ENCODE measurements at regions of chr12 and their contacts with region 1.

Region 1: DNA sequence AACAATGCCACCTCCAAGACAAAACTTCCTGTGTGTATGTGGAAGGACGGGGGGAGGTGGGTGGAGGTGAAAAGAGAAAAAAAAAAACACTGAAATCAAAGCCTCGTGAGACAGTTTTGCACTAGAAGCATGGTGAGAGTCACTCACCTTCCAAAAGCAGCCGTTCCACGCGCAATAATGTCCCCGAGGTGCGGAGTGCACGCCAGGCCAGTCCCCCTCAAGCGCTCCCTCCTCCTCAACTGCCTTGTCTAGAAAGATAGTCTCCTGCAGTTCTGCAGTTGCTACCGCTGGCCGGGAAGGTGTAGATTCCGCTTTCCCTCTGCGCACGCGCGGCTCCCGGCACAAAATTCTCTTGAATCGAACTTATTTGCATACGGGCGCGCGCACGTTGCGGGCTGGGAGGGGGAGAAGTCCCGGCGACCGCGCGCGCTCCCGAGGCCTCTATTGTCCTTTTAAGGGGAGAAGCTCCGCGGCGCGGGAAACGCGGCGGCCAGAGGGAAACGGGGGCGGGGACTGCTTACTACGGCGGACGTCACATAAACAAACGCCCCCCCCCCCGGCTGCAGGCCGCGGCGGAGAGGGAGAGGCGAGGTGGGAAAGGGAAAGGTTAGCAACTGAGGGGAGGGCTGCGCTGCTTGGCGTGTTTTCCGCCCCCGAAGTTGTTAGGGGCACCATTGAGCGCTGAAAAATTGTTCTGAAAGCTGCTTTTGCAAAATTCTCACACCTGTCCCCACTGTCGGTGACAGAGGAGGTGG is at the start of gene SINHCAF:
- DNase-seq: peak; percentile 100
- H3K4me3 Mint-ChIP-seq: peak within 1 kb of the TSS; percentile 99
- H3K27ac Mint-ChIP-seq: peak within 1 kb of the TSS; percentile 100
- H3K4me1 Mint-ChIP-seq: peaks cover 30% of the 10 kb centered on the region
- H3K27me3 Mint-ChIP-seq: peaks cover 12% of the 10 kb centered on the region
- total RNA-seq, gene SINHCAF: 261 and 277 TPM in 2 replicates

Region 2: DNA sequence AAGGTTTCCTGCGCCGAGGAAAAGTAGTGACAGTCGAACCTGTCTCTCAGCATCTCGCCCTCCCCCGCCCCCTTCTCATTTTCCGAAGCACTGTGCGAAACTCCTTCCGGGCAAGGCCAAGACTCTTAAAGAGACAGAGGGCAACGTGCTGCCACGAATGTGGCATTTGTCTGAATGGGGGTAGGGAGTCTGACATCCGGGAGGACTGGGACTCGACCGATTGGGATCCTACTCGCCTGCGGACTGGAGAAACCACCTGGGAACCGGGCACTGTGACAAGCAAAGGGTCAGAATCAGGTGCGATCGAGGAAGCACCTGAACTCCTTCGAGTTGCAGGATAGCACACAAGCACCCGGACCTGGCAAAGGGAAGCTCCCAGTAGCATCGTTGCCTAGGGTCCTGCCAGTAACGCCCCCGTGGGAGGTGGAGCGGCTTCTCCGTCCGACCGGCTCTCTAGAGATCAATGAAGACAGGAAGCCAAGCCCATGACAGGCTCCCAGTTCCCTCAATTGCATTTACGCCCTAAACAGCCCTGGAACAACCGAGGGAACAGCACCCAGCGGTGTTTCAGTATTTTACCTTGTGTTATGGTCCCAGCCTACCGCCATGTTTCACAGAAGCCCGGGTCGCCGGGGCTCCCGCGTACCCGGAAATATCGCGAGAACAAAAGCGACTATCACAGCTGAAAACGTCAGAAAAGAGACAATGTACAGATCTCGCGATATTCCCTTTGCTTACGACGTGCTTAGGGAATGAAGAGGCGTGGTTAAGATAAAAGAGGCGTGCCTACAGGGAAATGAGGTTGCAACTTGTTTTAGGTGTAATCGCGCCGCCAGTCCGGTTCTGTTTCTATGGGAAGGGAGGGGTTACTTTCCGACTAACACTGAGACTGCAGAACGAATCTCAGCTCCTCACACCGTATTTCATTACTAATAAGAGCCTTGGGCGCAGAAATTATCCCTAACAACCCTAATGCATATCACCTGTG is 1945.2 kb before region 1 on chr12 and contains the start of gene ERGIC2:
- intact Hi-C with region 1: loop called (anchors 10 kb)
- DNase-seq: peak; percentile 97
- H3K4me3 Mint-ChIP-seq: peak within 1 kb of the TSS; percentile 96
- H3K27ac Mint-ChIP-seq: peak within 1 kb of the TSS; percentile 98
- H3K4me1 Mint-ChIP-seq: peaks cover 38% of the 10 kb centered on the region
- H3K27me3 Mint-ChIP-seq: no peaks in the 10 kb centered on the region
- total RNA-seq, gene ERGIC2: 95.6 and 101 TPM in 2 replicates

Region 3: GRCh38 chr12:31362759-31363415 is 36.8 kb after region 1 on chr12:
- intact Hi-C with region 1: loop called (anchors 1 kb)
- DNase-seq: peak; percentile 81
- H3K4me3 Mint-ChIP-seq: peak overlapping the region; percentile 75
- H3K27ac Mint-ChIP-seq: peak overlapping the region; percentile 94
- H3K4me1 Mint-ChIP-seq: peaks cover 19% of the 10 kb centered on the region
- H3K27me3 Mint-ChIP-seq: no peaks in the 10 kb centered on the region

Region 4: GRCh38 chr12:31749024-31749704 is 423.1 kb after region 1 on chr12:
- intact Hi-C with region 1: loop called (anchors 5 kb)
- DNase-seq: peak; percentile 89
- H3K4me3 Mint-ChIP-seq: peak overlapping the region; percentile 1
- H3K27ac Mint-ChIP-seq: peak overlapping the region; percentile 38
- H3K4me1 Mint-ChIP-seq: peaks cover 43% of the 10 kb centered on the region
- H3K27me3 Mint-ChIP-seq: no peaks in the 10 kb centered on the region

Region 5: GRCh38 chr12:32586390-32586789 is 1260.3 kb after region 1 on chr12:
- intact Hi-C with region 1: loop called (anchors 10 kb)
- DNase-seq: no peak
- H3K4me3 Mint-ChIP-seq: peak overlapping the region; percentile 18
- H3K27ac Mint-ChIP-seq: peak overlapping the region; percentile 69
- H3K4me1 Mint-ChIP-seq: peaks cover 66% of the 10 kb centered on the region
- H3K27me3 Mint-ChIP-seq: no peaks in the 10 kb centered on the region

Measured in activated CD4-positive, alpha-beta T cell treated with anti-CD3 and anti-CD28 coated beads, Interleukin-2, amount 10 ng/mL, durations not matched to agents 24 days and 14 days (primary cell).